Ovary (tissue), 10 donors: ENCODE measurements at regions of chr9 and their contacts with region 1.

Region 1: DNA sequence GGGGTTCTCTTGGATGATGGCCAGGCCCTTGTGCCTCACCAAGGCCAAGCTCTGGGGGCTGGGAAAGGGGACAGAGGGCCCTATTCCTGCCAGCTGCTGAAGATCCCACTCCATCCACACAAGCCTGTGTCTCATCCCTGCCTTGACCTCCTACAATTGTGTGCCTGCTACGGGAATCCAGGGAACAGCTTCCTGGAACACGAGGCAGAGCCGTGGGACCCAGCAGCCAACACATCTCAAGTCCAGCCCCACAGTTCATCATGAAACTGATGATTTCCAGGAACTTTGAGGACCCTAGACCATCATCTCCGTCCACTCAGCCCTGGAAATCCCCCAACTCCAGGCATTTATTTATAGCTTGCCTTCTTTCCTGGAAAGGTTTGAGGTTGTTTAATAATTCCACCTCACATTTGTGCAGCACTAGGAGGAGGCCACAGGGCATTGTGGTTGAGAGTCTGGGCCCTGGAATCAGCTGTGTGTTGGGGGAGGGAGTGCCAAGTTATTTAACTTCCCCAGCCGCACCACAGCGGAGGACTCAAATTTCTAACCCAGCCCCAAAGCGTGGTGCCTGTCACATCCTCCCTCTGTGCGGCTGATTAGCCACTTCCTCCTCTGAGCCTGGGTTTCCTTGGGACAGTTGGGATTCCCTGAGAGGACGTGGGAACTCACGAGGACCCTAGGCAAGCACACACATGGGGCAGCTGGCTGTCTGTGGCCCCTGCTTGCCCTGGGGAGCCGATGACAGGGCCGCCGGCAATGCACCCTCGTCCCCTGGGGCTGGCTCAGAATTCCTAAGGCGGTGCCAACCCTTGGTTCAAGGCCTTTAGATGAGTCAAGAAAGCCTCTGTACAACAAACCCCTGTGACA is 58.2 kb upstream of the GGTA1 start:
- DNase-seq: peak; percentile 51 to 83 (median 63)
- H3K4me3 ChIP-seq: no peak overlapping the region
- H3K27ac ChIP-seq: peak overlapping the region in 1 of 2 donors; percentile 76
- H3K4me1 ChIP-seq: peaks cover 14% of the 10 kb centered on the region
- H3K27me3 ChIP-seq: no peaks in the 10 kb centered on the region
- CTCF ChIP-seq: no peak
- EP300 ChIP-seq: no peak
- POLR2A ChIP-seq: no peak

Region 2: DNA sequence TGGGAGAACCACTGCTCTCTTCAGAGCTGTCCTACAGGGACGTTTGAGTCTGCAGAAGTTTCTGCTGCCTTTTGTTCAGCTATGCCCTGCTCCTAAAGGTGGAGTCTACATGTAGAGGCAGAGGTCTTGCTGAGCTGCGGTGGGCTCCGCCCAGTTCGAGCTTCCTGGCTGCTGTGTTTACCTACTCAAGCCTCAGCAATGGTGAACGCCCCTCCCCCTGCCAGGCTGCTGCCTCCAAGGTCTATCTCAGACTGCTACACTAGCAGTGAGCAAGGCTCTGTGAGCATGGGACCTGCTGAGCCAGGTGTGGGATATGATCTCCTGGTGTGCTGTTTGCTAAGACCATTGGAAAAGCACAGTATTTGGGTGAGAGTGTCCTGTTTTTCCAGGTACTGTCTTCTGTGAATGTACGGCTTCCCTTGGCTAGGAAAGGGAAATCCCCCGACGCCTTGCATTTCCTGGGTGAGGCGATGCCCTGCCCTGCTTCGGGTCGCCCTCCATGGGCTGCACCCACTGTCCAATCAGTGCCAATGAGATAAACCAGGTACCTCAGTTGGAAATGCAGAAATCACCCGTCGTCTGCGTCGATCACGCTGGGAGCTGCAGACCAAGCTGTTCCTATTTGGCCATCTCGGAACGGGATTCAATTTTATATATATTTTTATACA is 424.5 kb before region 1 on chr9:
- intact Hi-C with region 1: no loop called
- DNase-seq: no peak
- H3K4me3 ChIP-seq: no peak overlapping the region
- H3K27ac ChIP-seq: no peak overlapping the region
- H3K4me1 ChIP-seq: no peaks in the 10 kb centered on the region
- H3K27me3 ChIP-seq: no peaks in the 10 kb centered on the region
- CTCF ChIP-seq: no peak
- EP300 ChIP-seq: no peak
- POLR2A ChIP-seq: no peak

Region 3: GRCh38 chr9:121424024-121424432 is 133.8 kb before region 1 on chr9:
- intact Hi-C with region 1: no loop called
- DNase-seq: no peak
- H3K4me3 ChIP-seq: no peak overlapping the region
- H3K27ac ChIP-seq: no peak overlapping the region
- H3K4me1 ChIP-seq: no peaks in the 10 kb centered on the region
- H3K27me3 ChIP-seq: no peaks in the 10 kb centered on the region
- CTCF ChIP-seq: no peak
- EP300 ChIP-seq: no peak
- POLR2A ChIP-seq: no peak

Region 4: DNA sequence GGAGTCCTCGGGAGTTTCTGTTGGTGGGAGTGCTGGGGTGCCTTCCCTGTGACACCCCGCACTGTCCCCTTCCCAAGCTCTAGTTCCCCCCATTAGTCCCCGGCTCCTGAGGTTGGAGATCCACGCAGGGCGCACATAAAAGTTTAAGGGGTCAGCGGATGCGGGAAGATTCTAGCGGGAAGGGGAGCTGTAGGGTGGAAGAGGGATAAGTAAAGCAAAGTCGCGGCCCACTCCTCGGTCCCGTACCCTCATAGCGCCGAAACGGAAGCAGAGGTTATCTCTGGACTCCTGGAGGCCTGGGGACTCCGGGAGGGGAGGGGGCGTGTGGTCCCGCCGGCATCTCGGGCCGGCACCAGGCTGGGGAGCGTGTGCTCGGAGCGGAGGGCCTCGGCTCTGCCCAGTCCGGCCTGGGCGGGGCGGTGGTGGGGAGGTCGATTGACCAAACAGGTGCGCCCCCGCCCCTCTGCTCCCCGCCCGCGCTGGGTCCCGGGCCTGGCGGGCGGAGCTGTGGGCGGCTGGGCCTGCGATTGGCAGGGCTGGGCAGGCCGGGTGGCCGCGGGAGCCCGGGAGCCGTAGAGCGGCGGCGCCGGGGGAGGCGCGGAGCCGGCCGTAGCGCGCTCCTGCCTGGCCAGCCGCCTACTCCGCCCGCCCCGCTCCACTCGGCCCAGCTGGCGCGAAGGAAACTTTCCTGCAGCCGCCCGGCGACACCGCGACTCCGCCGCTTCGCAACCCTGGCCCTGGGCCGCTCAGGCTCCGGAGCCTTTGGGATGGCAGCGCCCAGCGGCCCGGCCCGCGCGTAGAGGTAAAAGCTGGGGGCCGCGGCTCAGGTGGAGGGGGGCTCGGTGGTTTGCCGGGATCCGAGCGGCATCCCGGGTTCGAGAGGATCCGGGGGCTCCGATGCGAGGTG is 41.4 kb after region 1 on chr9:
- intact Hi-C with region 1: loop called in 2 of 4 experiments (anchors 5 to 10 kb)
- DNase-seq: peak; percentile 78 to 81 (median 79)
- H3K4me3 ChIP-seq: peak overlapping the region; percentile 80
- H3K27ac ChIP-seq: peak overlapping the region; percentile 32 to 89
- H3K4me1 ChIP-seq: peaks cover 2% of the 10 kb centered on the region
- H3K27me3 ChIP-seq: no peaks in the 10 kb centered on the region
- CTCF ChIP-seq: no peak
- EP300 ChIP-seq: no peak
- POLR2A ChIP-seq: peak; percentile 28